ENCODE measurements at regions of chr1 and their contacts with region 1.

Region 1: GRCh38 chr1:32754313-32755097 is 51.9 kb upstream of the SYNC start:
- DNase-seq: no peak
- H3K4me3 ChIP-seq: no peak overlapping the region
- H3K4me1 ChIP-seq: peaks cover under 1% of the 10 kb centered on the region; the same call in 1 of the 2 replicates
- H3K27me3 ChIP-seq: no peaks in the 10 kb centered on the region

Region 2: GRCh38 chr1:32706491-32706890 is 48.0 kb before region 1 on chr1:
- in situ Hi-C with region 1: loop called (anchors 5 kb)
- DNase-seq: no peak
- H3K4me3 ChIP-seq: no peak overlapping the region
- H3K4me1 ChIP-seq: peaks cover 6% of the 10 kb centered on the region
- H3K27me3 ChIP-seq: no peaks in the 10 kb centered on the region

Measured in HAP-1 (cell line).